Esophagus muscularis mucosa (tissue), 4 donors: ENCODE measurements at regions of chr14 and their contacts with region 1.

Region 1: GRCh38 chr14:20461274-20462001 is at the start of gene PIP4P1:
- DNase-seq: peak; percentile 100
- H3K4me3 ChIP-seq: peak within 1 kb of the TSS; percentile 74 to 99 (median 94)
- H3K27ac ChIP-seq: peak within 1 kb of the TSS; percentile 95 to 97 (median 96)
- H3K4me1 ChIP-seq: peaks cover 22 to 38% (median 31%) of the 10 kb centered on the region in 4 donors
- H3K27me3 ChIP-seq: no peaks in the 10 kb centered on the region
- CTCF ChIP-seq: peak in 1 of 3 experiments; percentile 15
- EP300 ChIP-seq: no peak
- POLR2A ChIP-seq: peak; percentile 85
- total RNA-seq, gene PIP4P1: 18.7 to 27.9 (median 24.5) TPM

Region 2: GRCh38 chr14:20327005-20327869 is 134.2 kb before region 1 on chr14:
- intact Hi-C with region 1: loop called (anchors 5 kb)
- DNase-seq: no peak
- H3K4me3 ChIP-seq: no peak overlapping the region
- H3K27ac ChIP-seq: peak overlapping the region; percentile 7 to 50 (median 44)
- H3K4me1 ChIP-seq: peaks cover 15 to 47% (median 43%) of the 10 kb centered on the region in 4 donors
- H3K27me3 ChIP-seq: no peaks in the 10 kb centered on the region
- CTCF ChIP-seq: peak; percentile 72 to 79 (median 78)
- EP300 ChIP-seq: no peak
- POLR2A ChIP-seq: no peak

Region 3: DNA sequence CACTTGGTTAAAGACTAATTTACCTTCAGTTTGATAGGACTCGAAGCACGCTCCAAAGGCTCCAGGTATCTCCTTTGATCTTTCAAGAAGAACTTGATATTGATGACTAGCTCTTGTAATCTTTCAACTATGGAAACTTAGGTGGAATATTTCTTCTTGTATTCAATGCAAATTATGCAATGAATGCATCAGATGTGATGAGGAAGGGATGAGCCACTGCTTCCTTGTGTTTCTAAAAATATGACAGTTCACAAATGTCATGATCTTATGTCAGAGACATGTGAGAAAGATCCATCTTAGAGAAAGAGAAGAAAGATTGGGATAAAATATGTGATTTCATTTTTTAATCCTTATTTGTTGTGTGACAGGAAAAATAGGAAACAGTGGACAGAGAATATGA is 89.5 kb after region 1 on chr14:
- intact Hi-C with region 1: no loop called
- DNase-seq: no peak
- H3K4me3 ChIP-seq: no peak overlapping the region
- H3K27ac ChIP-seq: no peak overlapping the region
- H3K4me1 ChIP-seq: no peaks in the 10 kb centered on the region
- H3K27me3 ChIP-seq: no peaks in the 10 kb centered on the region
- CTCF ChIP-seq: no peak
- EP300 ChIP-seq: no peak
- POLR2A ChIP-seq: no peak

Region 4: GRCh38 chr14:20989572-20990551 is 528.4 kb after region 1 on chr14 and contains the start of gene METTL17:
- intact Hi-C with region 1: loop called (anchors 10 kb)
- DNase-seq: peak; percentile 98
- H3K4me3 ChIP-seq: peak within 1 kb of the TSS; percentile 65 to 96 (median 76)
- H3K27ac ChIP-seq: peak within 1 kb of the TSS; percentile 75 to 82 (median 78)
- H3K4me1 ChIP-seq: peaks cover 26 to 34% (median 30%) of the 10 kb centered on the region in 4 donors
- H3K27me3 ChIP-seq: no peaks in the 10 kb centered on the region
- CTCF ChIP-seq: peak in 2 of 3 experiments; percentile 19
- EP300 ChIP-seq: no peak
- POLR2A ChIP-seq: peak; percentile 39
- total RNA-seq, gene METTL17: 39.8 to 57.4 (median 41.7) TPM

Region 5: DNA sequence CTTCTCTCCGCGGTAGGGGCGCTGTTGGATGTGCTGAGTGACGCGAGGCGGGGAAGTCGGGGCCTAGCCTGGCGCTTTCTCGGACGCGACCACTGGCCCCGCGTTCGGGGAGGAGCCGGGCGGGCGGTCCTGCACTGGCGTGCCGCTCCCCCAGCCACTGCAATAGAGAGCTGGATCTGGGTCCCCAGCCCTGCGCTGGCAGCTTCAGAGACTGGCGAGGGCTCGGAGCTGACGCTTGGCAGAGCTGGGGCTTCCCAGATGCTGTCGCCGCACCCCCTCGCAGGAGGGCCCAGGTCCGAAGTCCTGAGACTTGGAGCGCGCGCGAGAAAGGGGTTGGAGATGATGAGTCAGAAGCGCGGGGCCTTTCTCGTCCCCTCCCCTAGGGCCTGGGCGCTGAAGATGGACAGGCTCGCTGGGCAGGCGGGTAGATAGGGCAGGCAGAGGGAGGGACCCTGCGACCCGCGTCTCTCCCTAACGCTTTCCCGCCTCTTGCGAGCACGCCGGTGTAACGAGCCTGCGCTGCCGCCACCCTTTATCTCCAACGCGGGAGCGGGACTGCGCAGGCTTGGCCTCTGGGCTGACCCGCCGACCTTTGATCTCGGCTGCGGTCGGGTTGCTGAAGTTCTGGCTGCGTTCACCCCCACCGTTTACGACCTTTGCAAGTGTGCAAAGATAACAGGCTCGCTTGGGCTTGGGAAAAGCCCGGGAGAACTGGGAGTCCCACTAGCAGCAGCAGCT is 642.4 kb after region 1 on chr14:
- intact Hi-C with region 1: loop called (anchors 10 kb)
- DNase-seq: peak; percentile 99
- H3K4me3 ChIP-seq: peak overlapping the region; percentile 62 to 75 (median 71)
- H3K27ac ChIP-seq: peak overlapping the region; percentile 93 to 99 (median 98)
- H3K4me1 ChIP-seq: peaks cover 44 to 60% (median 57%) of the 10 kb centered on the region in 4 donors
- H3K27me3 ChIP-seq: no peaks in the 10 kb centered on the region
- CTCF ChIP-seq: peak; percentile 49 to 86 (median 68)
- EP300 ChIP-seq: no peak
- POLR2A ChIP-seq: peak; percentile 75